HEK293 (cell line): ENCODE measurements at regions of chr9 and their contacts with region 1.

Region 1: GRCh38 chr9:74521009-74521408 is 23.9 kb downstream of the RORB start:
- H3K4me3 ChIP-seq: no peak overlapping the region
- H3K27ac ChIP-seq: no peak overlapping the region
- H3K4me1 ChIP-seq: no peaks in the 10 kb centered on the region
- CTCF ChIP-seq: no peak

Region 2: GRCh38 chr9:74501570-74501969 is 19.4 kb before region 1 on chr9:
- CTCF ChIA-PET with region 1: no interaction called
- POLR2A ChIA-PET with region 1: interaction called, 10 read pairs
- H3K4me3 ChIP-seq: no peak overlapping the region
- H3K27ac ChIP-seq: no peak overlapping the region
- H3K4me1 ChIP-seq: no peaks in the 10 kb centered on the region
- CTCF ChIP-seq: no peak

Region 3: DNA sequence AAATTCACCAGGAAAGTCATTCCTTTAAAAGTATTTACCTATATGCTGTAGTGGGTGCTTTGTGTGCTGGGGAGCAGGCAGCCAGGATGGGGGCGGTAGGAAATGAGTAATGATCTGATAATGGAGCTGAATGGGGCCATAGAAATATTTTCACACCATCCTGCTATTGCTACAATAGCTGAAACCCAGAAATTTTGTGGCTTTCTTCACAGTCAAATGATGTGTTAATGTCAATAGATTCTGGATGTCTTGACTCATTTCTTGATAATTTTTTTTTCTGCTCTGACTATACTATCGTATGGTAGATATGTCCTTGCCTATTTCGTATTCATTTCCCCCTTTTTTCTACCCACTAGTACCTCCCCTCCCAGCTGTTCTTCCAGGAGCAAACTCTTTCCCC is 35.7 kb after region 1 on chr9:
- CTCF ChIA-PET with region 1: no interaction called
- POLR2A ChIA-PET with region 1: no interaction called
- H3K4me3 ChIP-seq: no peak overlapping the region
- H3K27ac ChIP-seq: no peak overlapping the region
- H3K4me1 ChIP-seq: no peaks in the 10 kb centered on the region
- CTCF ChIP-seq: no peak

Region 4: DNA sequence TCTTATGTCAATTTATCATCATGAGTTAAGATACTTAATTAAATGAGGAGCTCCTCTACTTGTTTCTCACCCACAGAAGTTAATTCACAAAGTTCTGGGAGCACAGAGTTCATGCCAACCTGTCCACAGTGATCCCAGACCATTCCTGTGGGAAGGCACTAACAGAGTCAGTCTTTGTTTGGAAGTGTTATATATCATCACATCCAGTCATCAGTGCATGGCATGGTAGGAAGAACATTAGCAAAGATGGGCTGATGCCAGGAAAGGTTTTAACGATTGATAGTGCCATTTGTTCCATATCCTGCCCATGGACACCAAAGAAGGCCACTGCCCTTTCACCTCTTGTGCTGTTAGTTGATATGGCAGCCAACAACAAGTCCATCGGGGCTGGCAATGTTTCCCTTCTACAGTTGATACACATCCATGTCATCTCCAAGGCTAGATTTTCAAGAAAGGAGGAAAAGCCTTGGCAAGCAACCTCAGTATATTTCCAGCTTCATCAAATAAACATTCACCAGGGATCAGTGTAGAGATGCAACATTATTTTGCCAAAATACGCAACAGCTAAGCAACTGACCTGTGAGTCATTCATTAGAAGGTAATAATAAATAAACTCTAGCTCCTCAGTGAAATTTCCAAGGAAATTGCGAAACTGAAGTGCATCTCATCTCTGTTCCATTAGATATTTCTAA is 145.8 kb after region 1 on chr9:
- CTCF ChIA-PET with region 1: no interaction called
- POLR2A ChIA-PET with region 1: no interaction called
- H3K4me3 ChIP-seq: no peak overlapping the region
- H3K27ac ChIP-seq: no peak overlapping the region
- H3K4me1 ChIP-seq: no peaks in the 10 kb centered on the region
- CTCF ChIP-seq: no peak